Colonic mucosa (tissue), 4 donors: ENCODE measurements at regions of chr1 and their contacts with region 1.

Region 1: DNA sequence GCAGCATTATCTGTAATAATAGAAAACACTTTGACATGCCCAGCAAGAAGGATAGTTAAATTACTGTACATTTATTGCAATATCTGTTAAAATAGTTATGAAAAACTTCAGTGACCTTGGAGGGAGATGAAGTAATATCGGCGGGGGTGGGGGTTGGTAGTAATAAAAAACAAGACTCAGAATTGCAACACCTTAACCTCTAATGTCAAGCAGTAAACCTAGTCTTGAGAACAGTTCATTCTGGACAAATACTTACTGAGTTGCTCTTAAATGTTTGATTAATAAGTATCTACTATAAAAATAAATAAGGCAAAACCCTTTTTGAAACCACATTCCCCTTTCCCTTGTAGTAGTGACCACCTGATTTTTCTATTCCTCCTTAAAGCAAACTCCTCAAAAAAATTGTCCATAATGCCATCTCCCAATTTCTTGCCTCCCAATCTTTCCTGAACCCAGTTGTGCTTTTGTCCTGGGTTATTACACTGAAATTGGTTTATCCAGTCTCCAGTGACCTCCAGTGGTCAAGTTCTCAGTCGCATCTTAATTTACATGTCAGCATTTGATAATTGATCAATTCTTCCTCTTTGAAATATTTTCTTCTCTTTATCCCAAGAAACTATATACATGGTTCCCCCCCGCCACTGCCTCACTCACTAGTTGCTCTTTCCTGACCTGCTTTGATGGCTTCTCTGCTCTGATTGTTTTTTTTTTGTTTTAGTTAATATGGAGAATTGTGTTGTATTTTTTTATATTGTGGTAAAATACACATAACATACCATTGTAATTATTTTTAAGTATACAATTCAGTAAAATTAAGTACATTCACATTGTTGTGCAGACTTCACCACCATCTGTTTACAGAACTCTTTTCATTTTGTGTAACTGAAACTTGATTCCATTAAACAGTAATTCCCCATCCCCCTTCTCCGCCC is 36.8 kb downstream of the RAP1A start:
- DNase-seq: peak; percentile 41
- H3K4me3 ChIP-seq: no peak overlapping the region
- H3K27ac ChIP-seq: no peak overlapping the region
- H3K4me1 ChIP-seq: peaks cover 14% of the 10 kb centered on the region
- H3K27me3 ChIP-seq: no peaks in the 10 kb centered on the region
- CTCF ChIP-seq: peak; percentile 40

Region 2: DNA sequence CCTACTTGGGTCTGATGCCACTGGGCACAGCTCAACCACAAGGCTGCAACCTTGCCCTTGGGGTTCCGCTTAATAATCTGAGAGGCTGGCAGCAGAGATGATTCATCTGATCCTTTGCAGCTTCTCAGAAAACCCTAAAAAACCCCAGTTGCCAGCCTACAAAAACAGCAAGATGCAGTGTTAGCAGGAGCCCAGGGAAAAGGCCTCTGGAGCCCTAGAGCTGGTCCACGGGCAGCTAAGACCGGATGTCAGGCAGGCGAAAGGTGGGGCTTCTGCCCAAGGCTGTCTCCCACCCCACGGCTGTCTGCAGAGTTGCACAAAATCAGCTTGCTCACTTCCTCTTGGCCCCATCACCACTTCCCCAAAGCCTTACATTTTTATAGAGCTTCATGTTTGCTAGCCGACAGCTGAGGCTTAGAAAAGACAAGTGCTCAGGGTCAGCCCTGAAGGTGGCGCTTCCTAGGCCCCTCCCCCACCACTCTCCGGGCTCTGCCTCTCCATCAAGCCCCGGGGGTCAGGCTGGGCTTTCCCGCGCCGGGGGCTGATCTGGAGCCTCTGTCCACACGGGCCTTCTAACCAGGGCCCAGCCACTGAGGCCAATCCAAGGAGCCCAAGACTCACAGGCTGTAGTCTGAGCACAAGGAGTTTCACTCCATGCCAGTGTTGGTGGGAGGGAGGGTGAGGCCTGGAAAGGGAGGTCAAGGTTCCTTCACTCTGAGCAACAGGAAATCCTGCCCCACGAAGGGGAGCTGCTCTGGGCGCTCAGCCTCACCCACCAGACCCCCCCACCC is 148.7 kb before region 1 on chr1:
- intact Hi-C with region 1: loop called (anchors 2 kb)
- DNase-seq: peak; percentile 89
- H3K4me3 ChIP-seq: peak overlapping the region; percentile 19
- H3K27ac ChIP-seq: peak overlapping the region; percentile 95
- H3K4me1 ChIP-seq: peaks cover 19% of the 10 kb centered on the region
- H3K27me3 ChIP-seq: no peaks in the 10 kb centered on the region
- CTCF ChIP-seq: no peak

Region 3: GRCh38 chr1:111856411-111857185 is 200.2 kb after region 1 on chr1:
- intact Hi-C with region 1: no loop called
- DNase-seq: no peak
- H3K4me3 ChIP-seq: no peak overlapping the region
- H3K27ac ChIP-seq: no peak overlapping the region
- H3K4me1 ChIP-seq: no peaks in the 10 kb centered on the region
- H3K27me3 ChIP-seq: no peaks in the 10 kb centered on the region
- CTCF ChIP-seq: no peak